GM12878 (cell line): ENCODE measurements at regions of chr11 and their contacts with region 1.

Region 1: GRCh38 chr11:120660024-120660565 is 148.5 kb downstream of the GRIK4 start:
- DNase-seq: no peak
- ATAC-seq: peak; percentile 24
- H3K4me3 ChIP-seq: no peak overlapping the region
- H3K27ac ChIP-seq: no peak overlapping the region
- H3K4me1 ChIP-seq: peaks cover 35% of the 10 kb centered on the region
- H3K27me3 ChIP-seq: no peaks in the 10 kb centered on the region; a peak in 1 of 4 replicates
- CTCF ChIP-seq: peak; percentile 52 to 79 (median 72)
- EP300 ChIP-seq: no peak
- POLR2A ChIP-seq: no peak
- RAD21 ChIP-seq: peak; percentile 53

Region 2: DNA sequence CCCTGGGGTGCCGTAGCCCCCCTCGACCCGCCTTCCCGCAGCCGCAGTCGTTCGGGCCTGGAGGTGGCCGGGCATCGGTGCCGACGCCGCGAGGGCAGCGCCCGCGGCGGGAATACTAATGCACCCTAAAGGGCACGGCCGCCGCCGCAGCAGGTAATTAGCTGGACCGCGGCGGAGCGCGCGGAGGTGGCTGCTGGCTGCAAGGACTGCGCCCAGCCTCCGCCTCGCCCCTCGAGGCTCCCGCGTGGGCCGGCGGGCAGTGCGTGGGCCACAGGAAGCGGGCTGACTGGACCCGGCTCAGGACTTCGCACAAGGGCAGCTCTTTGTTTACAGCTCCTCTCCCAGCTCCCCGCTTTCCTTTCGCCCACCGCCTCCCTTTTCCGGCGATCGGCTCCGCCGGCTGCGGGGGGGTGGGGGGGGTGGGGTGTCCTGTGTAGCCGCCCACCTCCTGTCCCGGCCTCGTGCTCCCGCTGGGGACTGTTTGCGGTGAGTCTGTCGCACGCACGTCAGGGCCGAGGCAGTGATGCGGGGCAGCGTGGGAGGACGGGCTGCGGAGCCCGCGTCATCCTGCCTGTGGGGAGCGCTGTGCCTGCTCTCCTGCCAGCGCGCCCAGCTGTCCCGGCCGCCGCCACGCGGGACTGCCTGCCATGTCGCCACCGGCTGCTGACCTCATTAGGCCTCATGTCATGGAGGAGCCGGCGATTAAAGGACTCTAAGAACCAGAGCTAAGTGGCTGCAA is 95.4 kb before region 1 on chr11:
- CTCF ChIA-PET with region 1: interaction called, 6 read pairs
- POLR2A ChIA-PET with region 1: interaction called, 4 read pairs
- RAD21 ChIA-PET with region 1: interaction called, 5 read pairs
- SMC1A ChIA-PET with region 1: interaction called, 5 read pairs
- in situ Hi-C with region 1: no loop called
- intact Hi-C with region 1: loop called (anchors 2 kb)
- DNase-seq: peak; percentile 49
- ATAC-seq: peak; percentile 90
- H3K4me3 ChIP-seq: peak overlapping the region; percentile 47; the same call in 1 of the 2 replicates
- H3K27ac ChIP-seq: peak overlapping the region; percentile 35
- H3K4me1 ChIP-seq: peaks cover 18% of the 10 kb centered on the region
- H3K27me3 ChIP-seq: no peaks in the 10 kb centered on the region
- CTCF ChIP-seq: peak; percentile 21 to 44 (median 37); a peak in 3 of 6 replicates
- EP300 ChIP-seq: peak; percentile 85 to 94
- POLR2A ChIP-seq: no peak
- RAD21 ChIP-seq: peak; percentile 9; the same call in 1 of the 2 replicates

Region 3: DNA sequence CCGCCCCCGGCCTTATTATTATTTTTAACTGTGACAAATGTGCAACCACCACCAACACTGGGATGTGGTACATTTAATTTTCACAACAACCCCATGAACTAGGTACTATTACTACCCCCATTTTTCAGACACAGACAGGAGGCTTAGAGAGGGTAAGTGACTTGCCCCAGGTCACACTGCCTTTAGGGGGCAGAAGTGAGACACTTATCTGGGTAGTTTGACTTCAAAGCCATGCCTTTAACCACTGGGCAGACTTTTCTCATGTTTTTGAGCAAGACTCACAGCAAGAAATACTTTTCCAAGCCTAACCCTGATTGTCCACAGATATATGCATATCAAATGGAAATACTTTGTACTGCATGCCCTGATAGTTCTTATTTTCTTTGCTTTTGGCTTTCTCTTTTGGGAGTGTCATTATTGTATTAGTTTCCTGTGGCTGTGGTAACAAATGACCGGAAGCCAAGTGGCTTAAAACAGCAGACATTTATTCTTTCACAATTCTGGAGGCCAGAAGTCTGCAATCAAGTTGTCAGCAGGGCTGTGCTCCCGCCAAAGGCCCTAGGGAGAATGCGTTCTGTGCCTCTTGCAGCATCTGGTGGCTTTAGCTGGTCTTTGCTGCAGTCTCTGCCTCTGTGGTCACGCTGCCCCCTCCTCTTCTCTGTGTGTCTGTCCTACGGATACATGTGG is 37.8 kb before region 1 on chr11:
- CTCF ChIA-PET with region 1: interaction called, 13 read pairs
- POLR2A ChIA-PET with region 1: interaction called, 3 read pairs
- RAD21 ChIA-PET with region 1: interaction called, 9 read pairs
- SMC1A ChIA-PET with region 1: interaction called, 30 read pairs
- in situ Hi-C with region 1: no loop called
- intact Hi-C with region 1: no loop called
- DNase-seq: no peak
- ATAC-seq: peak; percentile 89
- H3K4me3 ChIP-seq: no peak overlapping the region
- H3K27ac ChIP-seq: no peak overlapping the region; the same call in 1 of the 2 replicates
- H3K4me1 ChIP-seq: peaks cover 6% of the 10 kb centered on the region; the same call in 1 of the 2 replicates
- H3K27me3 ChIP-seq: no peaks in the 10 kb centered on the region
- CTCF ChIP-seq: peak; percentile 35 to 56 (median 54)
- EP300 ChIP-seq: no peak
- POLR2A ChIP-seq: no peak
- RAD21 ChIP-seq: peak; percentile 36

Region 4: GRCh38 chr11:120645639-120646038 is 14.5 kb before region 1 on chr11:
- CTCF ChIA-PET with region 1: interaction called, 13 read pairs
- POLR2A ChIA-PET with region 1: no interaction called
- RAD21 ChIA-PET with region 1: interaction called, 3 read pairs
- SMC1A ChIA-PET with region 1: interaction called, 11 read pairs
- in situ Hi-C with region 1: no loop called
- intact Hi-C with region 1: no loop called
- DNase-seq: no peak
- ATAC-seq: no peak
- H3K4me3 ChIP-seq: no peak overlapping the region
- H3K27ac ChIP-seq: no peak overlapping the region
- H3K4me1 ChIP-seq: no peaks in the 10 kb centered on the region
- H3K27me3 ChIP-seq: no peaks in the 10 kb centered on the region; a peak in 1 of 4 replicates
- CTCF ChIP-seq: no peak
- EP300 ChIP-seq: no peak
- POLR2A ChIP-seq: no peak
- RAD21 ChIP-seq: no peak

Region 5: DNA sequence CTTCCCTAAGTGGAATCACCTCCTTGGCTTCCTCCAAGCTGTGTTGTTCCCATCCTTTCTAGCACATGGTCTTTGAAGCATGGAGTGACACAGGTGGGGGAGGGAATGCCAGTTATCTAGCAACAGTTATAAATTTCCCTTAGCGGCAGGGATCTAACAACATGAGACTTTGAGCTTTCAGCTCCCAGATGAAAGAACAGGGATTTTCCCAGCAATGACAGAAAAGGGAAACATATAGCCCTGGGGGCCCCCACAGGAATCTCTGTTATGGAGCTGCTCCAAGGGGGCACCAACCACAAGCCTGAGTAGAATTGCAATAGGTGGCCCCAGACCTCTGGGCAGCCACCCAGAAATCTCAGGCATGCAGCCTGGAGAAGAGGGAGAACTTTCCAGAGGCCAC is 14.4 kb after region 1 on chr11:
- CTCF ChIA-PET with region 1: interaction called, 111 read pairs
- POLR2A ChIA-PET with region 1: interaction called, 5 read pairs
- RAD21 ChIA-PET with region 1: interaction called, 3 read pairs
- SMC1A ChIA-PET with region 1: interaction called, 25 read pairs
- in situ Hi-C with region 1: no loop called
- intact Hi-C with region 1: no loop called
- DNase-seq: no peak
- ATAC-seq: no peak
- H3K4me3 ChIP-seq: no peak overlapping the region
- H3K27ac ChIP-seq: no peak overlapping the region
- H3K4me1 ChIP-seq: no peaks in the 10 kb centered on the region; the same call in 1 of the 2 replicates
- H3K27me3 ChIP-seq: no peaks in the 10 kb centered on the region
- CTCF ChIP-seq: no peak
- EP300 ChIP-seq: no peak
- POLR2A ChIP-seq: no peak
- RAD21 ChIP-seq: no peak

Region 6: DNA sequence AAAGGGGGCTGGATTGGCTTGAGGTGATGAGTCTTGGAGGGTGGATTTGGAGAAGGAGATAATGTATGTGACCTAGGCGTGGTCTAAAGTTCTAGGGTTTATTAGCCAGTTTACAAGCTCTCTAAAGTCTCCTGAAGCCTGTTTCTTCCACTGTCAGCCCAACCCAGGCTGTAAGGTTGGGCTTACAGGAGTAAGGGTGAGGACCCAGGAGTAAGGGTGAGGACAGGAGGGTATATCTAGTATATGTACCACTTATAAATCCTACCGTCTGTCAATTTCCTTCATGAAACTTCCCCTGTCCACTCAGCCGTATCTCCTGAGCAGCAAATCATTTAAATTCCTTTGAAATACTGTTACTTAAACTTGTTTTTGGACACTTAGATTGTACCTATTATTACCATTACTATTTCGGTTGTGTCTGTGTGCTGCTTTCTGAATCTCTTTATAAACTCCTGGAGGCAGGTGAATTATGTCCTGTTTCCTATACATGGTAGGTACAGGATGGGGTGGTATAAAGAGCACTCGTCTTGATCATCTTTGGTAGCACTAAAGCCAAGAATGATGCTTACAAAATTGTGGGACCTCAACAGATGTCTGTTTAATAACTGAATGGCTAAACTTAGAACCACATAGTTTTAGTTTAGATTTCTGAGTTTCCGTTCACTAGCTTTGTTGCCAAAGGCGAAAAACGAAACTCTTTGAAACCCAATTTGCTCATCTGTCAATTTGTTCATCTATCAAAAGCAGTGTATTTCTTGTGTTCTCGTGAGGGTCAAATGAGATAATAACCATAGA is 43.5 kb after region 1 on chr11:
- CTCF ChIA-PET with region 1: interaction called, 3 read pairs
- POLR2A ChIA-PET with region 1: no interaction called
- RAD21 ChIA-PET with region 1: interaction called, 3 read pairs
- SMC1A ChIA-PET with region 1: interaction called, 11 read pairs
- in situ Hi-C with region 1: no loop called
- intact Hi-C with region 1: no loop called
- DNase-seq: peak; percentile 77
- ATAC-seq: peak; percentile 85
- H3K4me3 ChIP-seq: peak overlapping the region; percentile 11; the same call in 1 of the 2 replicates
- H3K27ac ChIP-seq: peak overlapping the region; percentile 75
- H3K4me1 ChIP-seq: peaks cover 31% of the 10 kb centered on the region
- H3K27me3 ChIP-seq: no peaks in the 10 kb centered on the region
- CTCF ChIP-seq: no peak
- EP300 ChIP-seq: no peak; a peak in 1 of 4 replicates
- POLR2A ChIP-seq: no peak
- RAD21 ChIP-seq: no peak

Region 7: GRCh38 chr11:120710354-120711131 is 50.4 kb after region 1 on chr11:
- CTCF ChIA-PET with region 1: interaction called, 11 read pairs
- POLR2A ChIA-PET with region 1: no interaction called
- RAD21 ChIA-PET with region 1: interaction called, 4 read pairs
- SMC1A ChIA-PET with region 1: interaction called, 6 read pairs
- in situ Hi-C with region 1: no loop called
- intact Hi-C with region 1: loop called (anchors 5 kb)
- DNase-seq: no peak
- ATAC-seq: peak; percentile 45
- H3K4me3 ChIP-seq: peak overlapping the region; percentile 12; the same call in 1 of the 2 replicates
- H3K27ac ChIP-seq: peak overlapping the region; percentile 63
- H3K4me1 ChIP-seq: peaks cover 47% of the 10 kb centered on the region
- H3K27me3 ChIP-seq: no peaks in the 10 kb centered on the region
- CTCF ChIP-seq: no peak
- EP300 ChIP-seq: no peak
- POLR2A ChIP-seq: no peak
- RAD21 ChIP-seq: no peak